ENCODE measurements at regions of chr1 and their contacts with region 1.

Region 1: DNA sequence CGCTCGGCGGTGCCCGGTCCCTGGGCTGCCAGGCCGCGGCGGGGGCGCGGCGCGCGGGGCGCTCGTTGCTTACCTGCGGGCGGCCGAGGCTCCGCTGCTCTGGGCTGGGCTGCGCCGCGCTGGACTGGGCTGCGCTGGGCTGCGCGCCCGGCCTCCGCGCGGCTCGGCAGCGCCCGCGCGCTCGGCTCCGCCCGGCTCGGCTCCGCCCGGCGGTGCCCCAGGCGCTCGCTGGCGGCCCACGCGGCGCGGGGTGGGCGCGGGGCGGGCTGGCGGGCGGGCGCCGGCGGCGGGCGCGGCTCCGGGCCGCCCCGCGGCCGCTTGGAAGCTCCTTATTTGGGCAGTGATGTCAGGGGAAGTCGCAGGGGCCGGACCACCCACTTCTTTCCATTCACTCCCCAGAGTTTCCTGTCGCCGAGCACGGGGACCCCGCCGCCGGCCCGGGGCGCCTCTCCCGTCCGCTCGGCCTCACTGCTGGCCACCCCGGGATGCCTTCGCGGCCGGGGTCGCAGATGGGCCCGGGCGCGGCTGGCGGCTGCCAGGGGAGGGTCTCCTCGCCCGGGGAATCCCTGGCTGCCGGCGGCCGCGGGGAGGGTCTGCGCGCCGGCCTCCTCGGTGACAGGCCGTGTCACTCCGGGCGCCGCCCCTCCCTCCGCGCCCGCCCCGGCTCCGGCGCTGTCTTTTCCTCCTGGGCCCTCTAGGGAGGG is 177.7 kb upstream of the EDN2 start:
- DNase-seq: peak; percentile 88
- H3K4me3 Mint-ChIP-seq: peak overlapping the region; percentile 71
- H3K27ac Mint-ChIP-seq: peak overlapping the region; percentile 80
- H3K4me1 Mint-ChIP-seq: peaks cover 78% of the 10 kb centered on the region
- H3K27me3 Mint-ChIP-seq: no peaks in the 10 kb centered on the region

Region 2: DNA sequence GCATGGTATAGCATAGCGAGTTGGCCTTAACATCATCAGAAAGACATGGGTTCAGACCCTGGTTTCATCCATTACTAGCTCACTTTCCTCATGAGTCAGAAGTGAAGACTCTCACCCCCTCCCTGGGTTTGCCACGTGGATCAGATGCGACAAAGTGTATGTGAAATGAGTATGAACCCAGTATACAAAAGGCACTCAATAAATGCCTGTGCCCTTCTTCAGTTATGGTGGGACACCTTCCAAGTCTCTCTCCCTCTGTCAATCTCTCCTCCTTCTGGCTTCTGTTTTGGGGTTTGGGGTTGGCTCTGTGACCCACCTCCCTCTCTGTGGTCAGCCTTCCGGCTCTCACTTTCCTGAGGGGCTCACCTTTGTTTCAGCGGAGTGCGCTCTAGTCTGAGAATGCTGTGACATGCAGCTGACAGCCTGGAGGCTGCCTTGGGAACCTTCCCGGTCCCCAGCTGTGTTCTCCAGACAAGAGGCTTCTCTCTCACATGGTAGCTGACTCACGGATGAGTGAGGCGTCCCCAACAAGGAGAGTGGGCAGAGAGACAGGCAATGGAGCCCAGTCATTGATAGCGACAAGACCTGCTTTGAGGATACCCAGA is 22.8 kb before region 1 on chr1:
- CTCF ChIA-PET with region 1: interaction called, 3 read pairs
- POLR2A ChIA-PET with region 1: interaction called, 12 read pairs
- intact Hi-C with region 1: loop called (anchors 1 kb)
- DNase-seq: peak; percentile 87
- H3K4me3 Mint-ChIP-seq: peak overlapping the region; percentile 59
- H3K27ac Mint-ChIP-seq: no peak overlapping the region
- H3K4me1 Mint-ChIP-seq: peaks cover 12% of the 10 kb centered on the region
- H3K27me3 Mint-ChIP-seq: no peaks in the 10 kb centered on the region

Region 3: DNA sequence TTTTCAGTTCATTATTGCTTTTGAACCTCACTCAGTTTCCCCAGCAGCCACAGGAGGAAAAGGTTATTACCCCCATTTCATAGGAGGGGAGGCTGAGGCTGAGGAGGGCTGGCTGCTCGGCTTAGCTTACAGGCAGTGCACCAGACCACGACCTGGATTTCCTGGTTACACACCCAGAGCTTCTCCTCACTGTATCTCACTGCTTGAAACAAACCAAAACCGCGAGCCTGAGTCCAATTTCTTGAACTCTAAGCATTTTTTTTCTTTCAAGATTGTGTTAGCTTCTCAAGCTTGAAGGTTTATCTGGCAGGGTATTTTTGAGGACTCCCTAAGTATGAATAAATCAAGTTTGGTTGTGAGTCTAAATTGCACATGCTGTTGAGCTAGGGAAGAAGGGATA is 11.2 kb after region 1 on chr1:
- CTCF ChIA-PET with region 1: interaction called, 5 read pairs
- POLR2A ChIA-PET with region 1: interaction called, 40 read pairs
- intact Hi-C with region 1: no loop called
- DNase-seq: peak; percentile 72
- H3K4me3 Mint-ChIP-seq: peak overlapping the region; percentile 53
- H3K27ac Mint-ChIP-seq: peak overlapping the region; percentile 76
- H3K4me1 Mint-ChIP-seq: peaks cover 94% of the 10 kb centered on the region
- H3K27me3 Mint-ChIP-seq: no peaks in the 10 kb centered on the region

Region 4: DNA sequence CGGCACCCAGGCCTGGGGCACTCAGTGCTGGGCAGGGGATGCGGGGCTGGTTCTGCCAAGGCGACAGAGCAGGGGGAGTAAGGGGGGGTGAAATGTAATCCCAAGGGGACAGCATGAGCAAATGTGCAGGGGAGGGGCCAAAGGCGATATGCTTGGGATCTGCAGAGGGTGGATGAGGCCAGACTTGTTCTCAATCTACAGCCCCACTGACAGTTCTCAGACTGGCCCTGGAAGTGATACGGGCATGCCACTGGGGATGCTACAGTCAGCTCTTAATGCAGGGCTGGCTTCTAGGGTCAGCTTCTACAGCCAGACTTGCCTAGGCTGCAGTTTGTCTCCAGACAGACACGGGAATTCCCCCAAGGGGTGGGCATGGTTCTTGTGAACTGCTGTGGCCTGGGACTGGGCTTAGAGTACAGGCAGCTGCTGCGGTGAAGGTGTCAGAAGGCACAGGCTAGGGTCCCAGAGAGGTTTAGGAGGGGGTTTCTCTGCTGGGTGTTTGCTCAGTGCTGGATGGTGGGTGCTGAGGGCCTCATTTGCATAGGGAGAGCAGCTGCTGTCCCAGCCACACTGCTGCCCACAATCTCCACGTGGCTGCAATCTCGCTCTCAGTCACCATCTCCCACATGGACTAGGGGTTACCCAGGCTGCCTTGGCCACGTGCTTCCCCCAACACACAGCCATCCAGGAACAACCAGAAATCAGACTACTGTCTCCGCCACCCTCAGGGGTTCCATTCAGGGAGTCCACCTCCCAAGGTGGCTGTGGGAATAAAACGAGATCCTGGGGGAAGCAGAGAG is 66.4 kb after region 1 on chr1:
- CTCF ChIA-PET with region 1: no interaction called
- POLR2A ChIA-PET with region 1: interaction called, 18 read pairs
- intact Hi-C with region 1: loop called (anchors 2 kb)
- DNase-seq: peak; percentile 89
- H3K4me3 Mint-ChIP-seq: no peak overlapping the region
- H3K27ac Mint-ChIP-seq: peak overlapping the region; percentile 84
- H3K4me1 Mint-ChIP-seq: peaks cover 39% of the 10 kb centered on the region
- H3K27me3 Mint-ChIP-seq: no peaks in the 10 kb centered on the region

Region 5: DNA sequence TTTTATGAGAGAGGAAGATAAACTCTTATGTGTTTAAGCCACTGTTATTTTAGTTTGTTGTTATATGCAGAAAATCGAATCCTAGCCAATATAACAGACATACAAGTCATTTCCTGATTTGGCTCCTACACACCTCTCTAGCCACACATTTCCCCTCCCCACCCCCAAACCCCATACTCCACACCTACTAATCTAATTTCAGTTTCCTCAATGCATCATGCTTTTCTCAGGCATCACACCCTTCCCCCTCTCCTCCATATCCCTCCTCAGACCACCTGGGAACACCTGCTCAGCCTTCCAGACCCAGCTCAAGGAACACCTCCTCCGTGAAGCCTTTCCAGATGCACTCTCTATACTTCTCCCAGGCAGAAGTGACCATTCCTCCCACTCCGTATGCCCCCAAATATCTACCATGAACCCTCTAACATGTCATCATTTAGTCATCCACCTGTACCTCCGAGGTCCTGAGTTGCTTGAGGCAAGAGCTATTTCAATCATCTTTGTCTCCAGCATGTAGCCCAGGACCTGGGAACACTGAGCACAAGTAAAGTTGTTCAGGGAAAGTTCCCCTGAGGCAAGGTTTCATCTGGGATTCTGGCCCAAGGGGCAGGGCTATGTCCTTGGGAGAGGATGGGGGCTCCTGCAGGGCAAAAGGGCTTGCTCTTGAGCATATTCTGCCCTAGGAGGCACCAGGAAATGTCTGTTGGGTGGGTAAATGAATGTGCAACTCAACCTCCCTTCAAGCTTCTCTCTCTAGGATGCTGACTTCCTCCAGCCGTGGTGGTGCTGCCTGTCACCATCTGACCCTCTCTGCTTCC is 129.7 kb after region 1 on chr1:
- CTCF ChIA-PET with region 1: interaction called, 3 read pairs
- POLR2A ChIA-PET with region 1: interaction called, 3 read pairs
- intact Hi-C with region 1: loop called (anchors 5 kb)
- DNase-seq: peak; percentile 73
- H3K4me3 Mint-ChIP-seq: no peak overlapping the region
- H3K27ac Mint-ChIP-seq: peak overlapping the region; percentile 78
- H3K4me1 Mint-ChIP-seq: peaks cover 51% of the 10 kb centered on the region
- H3K27me3 Mint-ChIP-seq: no peaks in the 10 kb centered on the region